Naive thymus-derived CD4-positive, alpha-beta T cell (primary cell): ENCODE measurements at regions of chr2 and their contacts with region 1.

Region 1: GRCh38 chr2:118865106-118865505 is 17.7 kb upstream of the EN1 start:
- DNase-seq: peak in 1 of 9 donors; percentile 32
- ATAC-seq: peak; percentile 76
- H3K4me3 ChIP-seq: no peak overlapping the region
- H3K4me3 Mint-ChIP-seq: no peak overlapping the region
- H3K27ac ChIP-seq: no peak overlapping the region
- H3K27ac Mint-ChIP-seq: no peak overlapping the region
- H3K4me1 ChIP-seq: no peaks in the 10 kb centered on the region
- H3K4me1 Mint-ChIP-seq: peaks cover 0 to 2% (median 0%) of the 10 kb centered on the region in 7 donors
- H3K27me3 ChIP-seq: no peaks in the 10 kb centered on the region
- H3K27me3 Mint-ChIP-seq: peaks cover 32 to 54% (median 48%) of the 10 kb centered on the region in 5 donors

Region 2: DNA sequence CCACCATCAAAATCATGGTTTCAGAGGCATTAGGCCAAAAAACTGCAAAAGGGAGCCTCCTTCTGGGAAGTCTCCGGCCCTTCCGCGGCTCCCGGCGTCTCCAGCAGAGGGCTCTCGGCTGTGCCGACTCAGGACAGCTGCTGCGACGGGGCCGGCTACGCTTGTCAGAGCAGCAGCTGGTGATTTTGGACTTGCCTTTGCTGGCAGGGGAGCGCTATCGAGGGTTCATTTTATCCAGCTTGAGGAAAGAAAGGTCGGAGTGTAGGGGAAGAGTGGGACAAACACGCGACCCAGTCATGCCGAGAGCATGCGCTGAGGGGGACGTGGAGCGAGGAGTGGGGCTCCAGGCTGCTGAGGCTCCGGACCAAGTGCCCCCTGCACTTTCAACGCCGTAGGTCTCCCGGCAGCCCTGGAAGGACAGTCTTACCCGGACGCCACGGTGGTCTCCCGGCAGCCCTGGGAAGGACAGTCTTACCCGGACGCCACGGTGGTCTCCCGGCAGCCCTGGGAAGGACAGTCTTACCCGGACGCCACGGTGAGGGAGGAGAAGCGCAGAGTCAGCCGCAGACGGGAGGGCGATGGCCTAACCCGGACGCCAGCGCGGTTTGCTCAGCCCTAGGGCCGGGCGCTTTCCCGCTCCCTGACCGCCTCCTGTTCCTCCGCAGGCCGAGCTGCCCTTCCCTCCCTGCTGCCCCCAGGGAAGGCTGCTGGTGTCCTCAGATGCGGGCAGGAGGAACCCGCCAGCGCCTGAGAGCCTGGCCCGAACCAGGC is 1028.9 kb before region 1 on chr2:
- CTCF ChIA-PET with region 1: no interaction called
- POLR2A ChIA-PET with region 1: no interaction called
- intact Hi-C with region 1: loop called in 1 of 2 experiments (anchors 5 kb)
- DNase-seq: peak; percentile 25 to 50 (median 35)
- ATAC-seq: peak; percentile 77
- H3K4me3 ChIP-seq: no peak overlapping the region
- H3K4me3 Mint-ChIP-seq: peak overlapping the region; percentile 63 to 91 (median 88)
- H3K27ac ChIP-seq: peak overlapping the region; percentile 15
- H3K27ac Mint-ChIP-seq: peak overlapping the region in 6 of 9 donors; percentile 53 to 97 (median 83)
- H3K4me1 ChIP-seq: no peaks in the 10 kb centered on the region
- H3K4me1 Mint-ChIP-seq: peaks cover 4 to 22% (median 20%) of the 10 kb centered on the region in 7 donors
- H3K27me3 ChIP-seq: no peaks in the 10 kb centered on the region
- H3K27me3 Mint-ChIP-seq: peaks cover 0 to 2% (median 0%) of the 10 kb centered on the region in 5 donors